ENCODE measurements at regions of chr7 and their contacts with region 1.

Region 1: GRCh38 chr7:80060218-80060806 is 74.3 kb upstream of the GNAI1 start:
- DNase-seq: no peak
- H3K4me3 ChIP-seq: no peak overlapping the region
- H3K27ac ChIP-seq: no peak overlapping the region
- H3K4me1 ChIP-seq: no peaks in the 10 kb centered on the region
- H3K27me3 ChIP-seq: no peaks in the 10 kb centered on the region
- CTCF ChIP-seq: peak in 5 of 6 experiments; percentile 33 to 71 (median 58)
- POLR2A ChIP-seq: no peak

Region 2: DNA sequence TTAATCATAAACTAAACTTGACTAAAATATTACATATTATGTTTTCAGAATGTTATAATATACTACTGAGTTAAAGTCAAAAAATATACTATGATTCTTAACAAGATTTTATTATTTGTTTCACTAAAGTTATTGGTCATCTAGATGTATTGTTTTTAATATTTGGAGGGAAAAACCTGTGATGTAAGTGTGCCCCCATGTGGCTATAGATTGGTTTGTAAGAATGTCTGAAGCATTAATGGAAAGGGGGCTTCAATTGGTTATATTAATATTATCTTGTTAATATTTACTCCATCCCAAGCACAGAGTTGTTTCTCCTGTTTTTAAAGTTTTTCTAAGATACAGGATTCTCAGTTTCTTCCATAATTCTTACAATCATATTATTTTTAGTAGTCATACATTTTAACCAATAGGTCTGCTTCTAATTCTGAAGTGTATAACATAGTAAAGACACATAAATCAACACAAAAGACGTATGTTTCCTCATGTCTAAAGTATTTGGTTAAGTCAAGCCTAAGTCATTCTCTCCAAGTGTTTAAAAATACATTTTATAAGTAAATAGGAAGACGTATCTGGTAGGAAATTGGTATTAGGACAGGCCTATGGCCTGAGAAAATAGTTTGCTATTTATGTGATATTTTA is 393.5 kb after region 1 on chr7:
- intact Hi-C with region 1: loop called (anchors 5 kb)
- DNase-seq: no peak
- H3K4me3 ChIP-seq: no peak overlapping the region
- H3K27ac ChIP-seq: no peak overlapping the region
- H3K4me1 ChIP-seq: no peaks in the 10 kb centered on the region
- H3K27me3 ChIP-seq: no peaks in the 10 kb centered on the region
- CTCF ChIP-seq: peak in 3 of 6 experiments; percentile 31 to 40 (median 38)
- POLR2A ChIP-seq: no peak

Measured in thyroid gland (tissue), 4 donors.